GM10248 (cell line): ENCODE measurements at regions of chr3 and their contacts with region 1.

Region 1: DNA sequence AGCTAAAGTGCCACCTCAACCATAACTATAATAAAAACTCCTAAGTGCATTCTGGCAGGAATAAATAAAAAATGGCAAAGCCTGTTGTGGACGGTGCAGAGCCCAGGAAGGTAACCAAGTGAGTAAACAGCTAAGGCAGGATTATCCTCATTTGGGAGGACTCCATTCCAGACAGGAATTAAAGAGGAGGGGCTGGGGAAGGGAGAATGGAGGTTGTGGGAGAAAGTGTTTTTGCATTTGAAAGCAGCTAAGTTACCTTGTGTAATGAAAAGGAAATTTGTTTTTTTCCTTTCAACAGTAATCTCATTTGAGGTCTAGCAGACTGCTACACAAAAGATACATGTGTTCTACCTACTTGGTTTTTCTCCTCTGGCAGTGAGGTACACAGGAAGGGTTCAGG is 248.5 kb downstream of the TIGIT start:
- DNase-seq: no peak
- CTCF ChIP-seq: no peak

Region 2: DNA sequence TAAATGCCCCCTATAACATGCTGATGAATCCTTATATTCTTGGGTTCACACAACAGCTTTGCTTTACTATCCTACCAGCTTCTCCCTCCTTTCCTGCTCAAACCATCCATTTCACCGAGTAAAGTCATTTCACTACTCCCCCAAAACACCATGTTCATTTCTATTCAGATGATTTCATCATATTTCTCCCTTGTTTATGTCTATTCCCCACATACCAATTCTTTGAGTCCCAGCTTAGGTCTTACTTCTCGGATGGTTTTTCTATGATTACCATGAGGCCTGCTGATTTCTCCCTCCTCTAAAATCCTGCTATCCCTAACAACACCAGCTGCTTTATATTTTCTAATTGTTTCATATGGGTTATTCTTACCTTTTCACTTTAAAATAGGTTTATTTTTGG is 17.1 kb before region 1 on chr3:
- CTCF ChIA-PET with region 1: interaction called, 21 read pairs
- POLR2A ChIA-PET with region 1: no interaction called
- DNase-seq: no peak
- CTCF ChIP-seq: no peak